GM12878 (cell line): ENCODE measurements at regions of chr2 and their contacts with region 1.

Region 1: GRCh38 chr2:134118279-134119116 is 135.4 kb upstream of the MGAT5 start:
- DNase-seq: peak; percentile 96
- ATAC-seq: peak; percentile 62
- H3K4me3 ChIP-seq: peak overlapping the region; percentile 92
- H3K27ac ChIP-seq: peak overlapping the region; percentile 77
- H3K4me1 ChIP-seq: peaks cover 19% of the 10 kb centered on the region
- H3K27me3 ChIP-seq: no peaks in the 10 kb centered on the region
- CTCF ChIP-seq: peak; percentile 58 to 91 (median 80); a peak in 5 of 6 replicates
- EP300 ChIP-seq: peak; percentile 80 to 88
- POLR2A ChIP-seq: no peak
- RAD21 ChIP-seq: peak; percentile 99

Region 2: DNA sequence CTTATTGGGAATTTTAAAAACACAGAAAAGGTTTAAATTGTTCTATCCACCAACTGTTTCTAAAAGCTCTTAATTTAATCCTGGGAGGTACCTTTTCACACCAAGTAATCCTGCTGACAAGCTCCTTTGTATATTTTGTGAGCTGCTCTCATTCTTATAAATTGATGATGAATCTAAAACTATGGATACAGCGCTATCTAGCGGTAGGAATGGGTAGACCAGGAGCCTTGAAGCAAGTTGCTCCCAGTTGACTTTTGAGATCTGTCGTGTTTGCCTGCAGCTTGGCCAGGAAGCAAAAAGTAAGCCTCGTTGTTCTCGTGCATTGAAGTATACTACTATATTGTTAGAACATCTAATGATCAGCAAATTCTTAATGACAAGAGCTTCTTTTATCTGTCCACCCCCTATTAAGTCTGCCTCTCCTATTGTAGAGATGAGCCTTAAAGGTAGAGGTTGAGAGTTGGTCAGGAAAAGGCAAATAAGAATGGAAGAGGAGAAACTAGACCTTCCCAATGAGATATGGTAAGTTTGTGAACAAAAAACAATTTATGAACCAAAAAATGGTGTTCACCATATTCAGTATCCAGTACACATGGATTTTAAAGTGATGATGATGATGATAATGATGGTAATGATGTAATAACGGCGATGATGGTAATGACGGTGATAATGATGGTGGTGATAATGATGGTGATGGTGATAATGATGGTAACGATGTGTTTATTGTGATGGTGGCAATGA is 338.2 kb before region 1 on chr2:
- CTCF ChIA-PET with region 1: no interaction called
- POLR2A ChIA-PET with region 1: no interaction called
- RAD21 ChIA-PET with region 1: no interaction called
- SMC1A ChIA-PET with region 1: no interaction called
- in situ Hi-C with region 1: no loop called
- intact Hi-C with region 1: no loop called
- DNase-seq: peak; percentile 1
- ATAC-seq: peak; percentile 74
- H3K4me3 ChIP-seq: no peak overlapping the region
- H3K27ac ChIP-seq: no peak overlapping the region
- H3K4me1 ChIP-seq: no peaks in the 10 kb centered on the region
- H3K27me3 ChIP-seq: 0 out of 4 replicates have a peak, but pooled peaks cover 0 to 3% of the 10 kb centered on the region in 2 experiments
- CTCF ChIP-seq: peak; percentile 70 to 72 (median 71)
- EP300 ChIP-seq: no peak
- POLR2A ChIP-seq: no peak
- RAD21 ChIP-seq: peak; percentile 66

Region 3: DNA sequence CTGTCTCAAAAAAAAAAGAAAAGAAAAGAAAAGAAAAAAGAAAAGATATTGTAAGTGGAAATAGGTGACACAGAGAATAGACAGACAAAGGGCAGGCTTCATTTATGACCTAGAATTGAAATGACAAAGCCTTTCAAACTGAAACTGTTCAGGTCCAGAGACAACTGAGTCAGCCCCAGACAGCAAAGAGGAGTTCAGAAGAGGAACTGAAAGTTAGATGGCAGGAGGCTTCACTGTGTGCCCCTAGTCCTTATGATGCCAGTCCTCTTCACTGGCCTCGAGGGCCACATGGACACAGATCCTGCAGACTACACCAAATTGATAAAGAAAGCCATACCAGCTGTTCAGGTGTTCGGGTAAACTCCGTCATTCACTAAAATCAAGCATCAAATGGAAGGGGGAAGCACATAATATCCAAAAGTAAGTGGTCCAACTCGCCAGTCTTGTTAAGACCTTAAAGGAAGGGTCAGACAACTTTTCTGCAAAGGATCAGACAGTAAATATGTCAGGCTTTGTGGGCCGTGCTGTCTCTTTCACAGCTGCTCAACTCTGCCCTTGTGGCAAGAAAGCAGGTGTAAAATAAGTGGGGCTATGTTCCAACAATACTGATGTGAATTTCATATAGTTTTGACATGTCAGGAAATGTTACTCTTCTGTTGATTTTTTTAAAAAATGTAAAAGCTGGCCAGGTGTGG is 96.5 kb before region 1 on chr2:
- CTCF ChIA-PET with region 1: no interaction called
- POLR2A ChIA-PET with region 1: no interaction called
- RAD21 ChIA-PET with region 1: no interaction called
- SMC1A ChIA-PET with region 1: no interaction called
- in situ Hi-C with region 1: no loop called
- intact Hi-C with region 1: loop called (anchors 5 kb)
- DNase-seq: peak; percentile 78
- ATAC-seq: peak; percentile 98
- H3K4me3 ChIP-seq: no peak overlapping the region
- H3K27ac ChIP-seq: no peak overlapping the region
- H3K4me1 ChIP-seq: peaks cover 25% of the 10 kb centered on the region
- H3K27me3 ChIP-seq: no peaks in the 10 kb centered on the region
- CTCF ChIP-seq: no peak
- EP300 ChIP-seq: peak in 1 of 2 experiments; percentile 68; a peak in 1 of 4 replicates
- POLR2A ChIP-seq: no peak
- RAD21 ChIP-seq: no peak

Region 4: GRCh38 chr2:134212746-134213145 is 94.2 kb after region 1 on chr2:
- CTCF ChIA-PET with region 1: interaction called, 164 read pairs
- POLR2A ChIA-PET with region 1: interaction called, 3 read pairs
- RAD21 ChIA-PET with region 1: interaction called, 86 read pairs
- SMC1A ChIA-PET with region 1: interaction called, 84 read pairs
- in situ Hi-C with region 1: loop called (anchors 5 kb)
- intact Hi-C with region 1: loop called (anchors 5 kb)
- DNase-seq: no peak
- ATAC-seq: no peak
- H3K4me3 ChIP-seq: no peak overlapping the region
- H3K27ac ChIP-seq: no peak overlapping the region; the same call in 1 of the 2 replicates
- H3K4me1 ChIP-seq: peaks cover 25% of the 10 kb centered on the region
- H3K27me3 ChIP-seq: no peaks in the 10 kb centered on the region
- CTCF ChIP-seq: no peak
- EP300 ChIP-seq: no peak
- POLR2A ChIP-seq: no peak
- RAD21 ChIP-seq: no peak

Region 5: GRCh38 chr2:134253804-134254203 is 135.3 kb after region 1 on chr2 and contains the start of gene MGAT5:
- CTCF ChIA-PET with region 1: interaction called, 11 read pairs
- POLR2A ChIA-PET with region 1: interaction called, 6 read pairs
- RAD21 ChIA-PET with region 1: interaction called, 10 read pairs
- SMC1A ChIA-PET with region 1: interaction called, 17 read pairs
- in situ Hi-C with region 1: no loop called
- intact Hi-C with region 1: no loop called
- DNase-seq: no peak
- ATAC-seq: peak; percentile 8
- H3K4me3 ChIP-seq: peak within 1 kb of the TSS; percentile 21; the same call in 1 of the 2 replicates
- H3K27ac ChIP-seq: peak within 1 kb of the TSS; percentile 67
- H3K4me1 ChIP-seq: peaks cover 82% of the 10 kb centered on the region
- H3K27me3 ChIP-seq: no peaks in the 10 kb centered on the region
- CTCF ChIP-seq: no peak
- EP300 ChIP-seq: no peak
- POLR2A ChIP-seq: no peak
- RAD21 ChIP-seq: no peak
- polyA plus RNA-seq, gene MGAT5: 9.1 to 9.8 TPM

Region 6: GRCh38 chr2:134282629-134283400 is 164.3 kb after region 1 on chr2:
- CTCF ChIA-PET with region 1: interaction called, 9 read pairs
- POLR2A ChIA-PET with region 1: interaction called, 3 read pairs
- RAD21 ChIA-PET with region 1: interaction called, 17 read pairs
- SMC1A ChIA-PET with region 1: interaction called, 26 read pairs
- in situ Hi-C with region 1: no loop called
- intact Hi-C with region 1: loop called (anchors 2 kb)
- DNase-seq: peak; percentile 96
- ATAC-seq: peak; percentile 91
- H3K4me3 ChIP-seq: peak overlapping the region; percentile 47
- H3K27ac ChIP-seq: peak overlapping the region; percentile 95
- H3K4me1 ChIP-seq: peaks cover 87% of the 10 kb centered on the region
- H3K27me3 ChIP-seq: no peaks in the 10 kb centered on the region
- CTCF ChIP-seq: no peak
- EP300 ChIP-seq: peak; percentile 89 to 90
- POLR2A ChIP-seq: 0 out of 2 replicates have a peak, but pooled peaks have one; percentile 40
- RAD21 ChIP-seq: no peak

Region 7: GRCh38 chr2:134402410-134402809 is 283.9 kb after region 1 on chr2:
- CTCF ChIA-PET with region 1: interaction called, 6 read pairs
- POLR2A ChIA-PET with region 1: no interaction called
- RAD21 ChIA-PET with region 1: interaction called, 7 read pairs
- SMC1A ChIA-PET with region 1: interaction called, 12 read pairs
- in situ Hi-C with region 1: no loop called
- intact Hi-C with region 1: no loop called
- DNase-seq: no peak
- ATAC-seq: no peak
- H3K4me3 ChIP-seq: no peak overlapping the region
- H3K27ac ChIP-seq: no peak overlapping the region
- H3K4me1 ChIP-seq: 0 out of 2 replicates have a peak, but pooled peaks cover 7% of the 10 kb centered on the region
- H3K27me3 ChIP-seq: no peaks in the 10 kb centered on the region
- CTCF ChIP-seq: no peak
- EP300 ChIP-seq: no peak
- POLR2A ChIP-seq: no peak
- RAD21 ChIP-seq: no peak

Region 8: GRCh38 chr2:134454931-134455330 is 336.4 kb after region 1 on chr2:
- CTCF ChIA-PET with region 1: interaction called, 32 read pairs
- POLR2A ChIA-PET with region 1: no interaction called
- RAD21 ChIA-PET with region 1: interaction called, 12 read pairs
- SMC1A ChIA-PET with region 1: interaction called, 17 read pairs
- in situ Hi-C with region 1: no loop called
- intact Hi-C with region 1: loop called (anchors 2 kb)
- DNase-seq: no peak
- ATAC-seq: no peak
- H3K4me3 ChIP-seq: no peak overlapping the region
- H3K27ac ChIP-seq: no peak overlapping the region
- H3K4me1 ChIP-seq: no peaks in the 10 kb centered on the region
- H3K27me3 ChIP-seq: no peaks in the 10 kb centered on the region
- CTCF ChIP-seq: no peak
- EP300 ChIP-seq: no peak
- POLR2A ChIP-seq: 0 out of 2 replicates have a peak, but pooled peaks have one; percentile 14
- RAD21 ChIP-seq: no peak